Activated CD4-positive, alpha-beta T cell treated with anti-CD3 and anti-CD28 coated beads, Interleukin-2, amount 10 ng/mL, durations not matched to agents 7 days and 5 days (primary cell): ENCODE measurements at regions of chr2 and their contacts with region 1.

Region 1: DNA sequence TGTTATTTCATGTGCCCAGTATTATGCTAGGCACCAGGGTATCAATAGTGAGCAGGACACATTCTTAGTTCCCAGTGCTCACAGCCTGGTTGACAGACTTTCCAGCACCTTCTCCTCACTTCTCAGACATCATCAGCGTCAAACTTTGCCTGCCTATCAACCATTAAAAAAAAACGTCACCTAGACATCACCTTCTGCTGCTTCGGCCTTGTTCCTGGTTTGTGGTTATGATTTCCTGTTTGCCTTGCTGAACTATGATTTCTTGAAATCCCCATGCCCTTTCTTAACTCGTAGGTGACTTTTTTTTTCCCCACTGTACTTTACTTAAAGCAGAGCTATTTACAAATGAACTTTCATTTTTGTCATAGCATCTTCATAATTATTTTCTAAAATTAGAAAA is 60.4 kb upstream of the NABP1 start:
- DNase-seq: peak; percentile 68
- H3K4me3 Mint-ChIP-seq: peak overlapping the region; percentile 0
- H3K27ac Mint-ChIP-seq: peak overlapping the region; percentile 83
- H3K4me1 Mint-ChIP-seq: peaks cover 44% of the 10 kb centered on the region
- H3K27me3 Mint-ChIP-seq: peaks cover 3% of the 10 kb centered on the region

Region 2: DNA sequence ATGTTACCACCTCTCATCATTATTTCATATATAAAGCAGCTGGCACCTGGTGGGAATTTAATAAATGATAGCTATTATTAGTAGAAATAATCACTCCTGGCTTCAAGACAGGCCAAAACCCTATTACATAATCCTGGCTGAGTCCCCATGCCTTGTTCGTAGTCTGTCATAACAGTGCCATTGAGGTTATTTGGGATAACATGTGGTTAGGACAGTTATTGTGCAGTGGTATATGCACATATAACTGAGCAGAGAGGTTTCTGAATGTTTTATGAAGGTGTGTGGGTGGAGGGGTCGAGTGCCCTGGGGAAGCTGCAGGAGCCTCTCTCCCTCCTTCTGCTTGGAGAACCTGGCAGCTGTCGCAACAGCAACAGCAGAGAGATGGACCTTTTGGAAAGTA is 102.0 kb before region 1 on chr2:
- CTCF ChIA-PET with region 1: no interaction called
- POLR2A ChIA-PET with region 1: no interaction called
- DNase-seq: no peak
- H3K4me3 Mint-ChIP-seq: no peak overlapping the region
- H3K27ac Mint-ChIP-seq: no peak overlapping the region
- H3K4me1 Mint-ChIP-seq: no peaks in the 10 kb centered on the region
- H3K27me3 Mint-ChIP-seq: peaks cover 17% of the 10 kb centered on the region

Region 3: DNA sequence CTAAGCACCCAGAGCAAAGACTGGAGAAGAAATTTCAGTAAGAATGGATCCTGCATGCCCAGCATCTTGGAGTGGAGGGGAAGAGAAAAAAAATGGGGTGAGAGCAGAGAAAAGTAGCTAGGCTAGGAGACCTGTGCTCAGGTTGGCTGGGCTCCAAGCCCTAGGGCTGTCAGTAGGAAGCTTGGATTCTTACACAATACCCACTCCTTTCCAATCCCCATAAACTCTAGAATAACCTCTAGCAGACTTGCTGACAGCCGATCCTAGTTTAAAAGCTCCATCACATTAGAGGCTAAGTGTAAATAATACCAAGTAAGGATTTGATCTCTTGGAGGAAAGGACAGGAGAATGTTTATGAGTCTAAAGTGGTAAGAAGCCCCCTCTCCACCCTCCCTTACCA is 14.2 kb after region 1 on chr2:
- CTCF ChIA-PET with region 1: interaction called, 21 read pairs
- POLR2A ChIA-PET with region 1: no interaction called
- DNase-seq: no peak
- H3K4me3 Mint-ChIP-seq: no peak overlapping the region
- H3K27ac Mint-ChIP-seq: no peak overlapping the region
- H3K4me1 Mint-ChIP-seq: peaks cover 50% of the 10 kb centered on the region
- H3K27me3 Mint-ChIP-seq: peaks cover 3% of the 10 kb centered on the region